ENCODE measurements at regions of chr13 and their contacts with region 1.

Region 1: DNA sequence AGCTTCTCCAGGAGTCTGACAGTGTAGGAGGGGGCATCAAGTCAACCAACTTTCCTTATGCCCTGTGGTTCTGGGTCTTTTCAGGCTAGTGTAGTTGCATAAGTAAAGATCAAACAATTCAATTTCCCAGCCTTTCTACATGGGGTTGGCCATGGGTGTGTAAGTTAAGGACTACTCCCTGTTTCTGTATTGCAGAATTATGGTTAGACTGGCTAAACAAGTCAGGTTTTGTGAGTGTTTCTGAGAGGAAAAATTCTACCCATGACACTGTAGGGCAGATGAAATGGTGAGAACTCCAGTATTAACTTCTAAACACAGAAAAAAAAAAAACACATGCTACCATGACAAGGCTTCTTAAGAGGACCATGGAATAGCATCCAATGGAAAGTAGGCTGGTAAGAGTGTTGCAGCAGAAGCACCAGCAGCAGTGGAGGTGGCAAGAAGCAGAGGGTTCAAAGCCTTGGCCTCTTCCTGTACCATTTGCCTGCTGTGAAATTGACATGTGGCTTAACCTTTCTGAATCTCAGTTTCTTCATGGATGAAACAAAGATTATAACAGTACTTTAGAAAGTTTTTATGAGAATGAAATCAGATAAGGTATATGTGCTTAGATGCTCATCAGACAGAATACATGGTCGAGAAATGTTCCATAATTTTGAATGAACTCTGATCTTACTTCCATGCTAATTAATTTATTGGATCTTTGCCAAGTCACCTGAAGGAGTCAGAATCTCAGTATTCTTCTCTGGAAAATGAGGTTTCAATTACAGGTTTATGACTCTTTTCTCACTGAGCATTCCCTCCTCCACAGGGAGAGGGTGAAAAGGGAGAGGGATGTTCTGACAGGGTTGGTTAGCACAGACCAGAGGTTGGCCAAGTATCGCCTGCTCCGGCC is 11.4 kb upstream of the SCEL start:
- DNase-seq: no peak
- H3K4me3 Mint-ChIP-seq: no peak overlapping the region
- H3K27ac Mint-ChIP-seq: no peak overlapping the region
- H3K4me1 Mint-ChIP-seq: peaks cover 2% of the 10 kb centered on the region
- H3K27me3 Mint-ChIP-seq: no peaks in the 10 kb centered on the region

Region 2: GRCh38 chr13:77291774-77292173 is 232.3 kb before region 1 on chr13:
- intact Hi-C with region 1: no loop called
- DNase-seq: no peak
- H3K4me3 Mint-ChIP-seq: no peak overlapping the region
- H3K27ac Mint-ChIP-seq: peak overlapping the region; percentile 26
- H3K4me1 Mint-ChIP-seq: peaks cover 32% of the 10 kb centered on the region
- H3K27me3 Mint-ChIP-seq: no peaks in the 10 kb centered on the region

Region 3: DNA sequence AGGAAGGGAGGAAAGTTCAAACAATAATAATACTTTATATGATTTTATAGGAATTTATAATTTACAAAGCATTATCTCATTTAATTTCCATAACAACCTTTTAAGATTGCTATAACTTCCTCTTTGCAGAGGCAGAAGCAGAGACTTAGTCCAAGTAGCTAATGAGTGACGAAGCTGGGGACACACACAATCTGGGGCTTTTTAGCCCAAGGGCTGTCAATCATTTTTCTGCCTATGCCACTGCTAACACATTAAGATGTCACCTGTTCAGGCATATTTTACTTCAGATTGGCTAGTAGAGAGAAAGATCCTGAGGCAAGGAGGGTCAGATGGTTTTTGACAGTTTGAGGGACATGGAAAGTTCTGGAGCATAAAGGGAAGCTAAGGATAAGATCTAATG is 24.0 kb after region 1 on chr13:
- intact Hi-C with region 1: loop called (anchors 2 kb)
- DNase-seq: no peak
- H3K4me3 Mint-ChIP-seq: no peak overlapping the region
- H3K27ac Mint-ChIP-seq: no peak overlapping the region
- H3K4me1 Mint-ChIP-seq: no peaks in the 10 kb centered on the region
- H3K27me3 Mint-ChIP-seq: peaks cover 2% of the 10 kb centered on the region